Astrocyte of the cerebellum (primary cell): ENCODE measurements at regions of chr3 and their contacts with region 1.

Region 1: GRCh38 chr3:14402304-14402811 is at the start of gene SLC6A6:
- DNase-seq: peak; percentile 83
- H3K4me3 ChIP-seq: peak within 1 kb of the TSS; percentile 52
- CTCF ChIP-seq: peak; percentile 51

Region 2: DNA sequence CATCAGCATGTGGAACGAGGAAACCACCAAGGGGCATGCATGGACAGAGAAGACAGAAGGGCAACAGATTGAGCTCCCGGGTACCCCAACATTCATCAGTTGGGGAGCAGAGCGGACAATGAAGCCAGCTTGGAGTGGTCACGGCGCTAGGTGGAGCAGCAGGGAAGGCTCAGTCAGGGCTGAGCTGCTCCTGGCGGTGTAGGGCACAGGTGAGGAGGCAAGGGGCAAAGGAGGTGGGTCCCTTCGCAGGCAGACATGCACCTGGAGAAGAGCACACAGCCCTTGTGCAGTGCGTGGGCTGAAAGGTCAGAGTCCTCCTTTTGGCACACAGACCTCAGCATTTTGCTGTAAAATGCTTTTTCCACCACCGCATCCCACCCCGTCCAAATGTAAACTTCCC is 90.0 kb before region 1 on chr3:
- in situ Hi-C with region 1: no loop called
- DNase-seq: no peak
- H3K4me3 ChIP-seq: no peak overlapping the region
- CTCF ChIP-seq: no peak

Region 3: GRCh38 chr3:14452679-14453367 is 50.5 kb after region 1 on chr3:
- in situ Hi-C with region 1: loop called (anchors 5 kb)
- DNase-seq: peak; percentile 99
- H3K4me3 ChIP-seq: no peak overlapping the region
- CTCF ChIP-seq: peak; percentile 11